ENCODE measurements at regions of chr1 and their contacts with region 1.

Region 1: GRCh38 chr1:235128456-235129328 is at the start of gene TOMM20:
- DNase-seq: peak; percentile 96 to 100 (median 97)
- ATAC-seq: peak; percentile 94
- H3K4me3 ChIP-seq: peak within 1 kb of the TSS; percentile 90
- H3K27ac ChIP-seq: peak within 1 kb of the TSS; percentile 98
- H3K4me1 ChIP-seq: peaks cover 11 to 13% of the 10 kb centered on the region in 2 experiments; a peak in 4 of 5 replicates
- H3K27me3 ChIP-seq: no peaks in the 10 kb centered on the region
- CTCF ChIP-seq: 0 out of 6 replicates have a peak, but pooled peaks of 1 of the 3 experiments have one; percentile 12
- EP300 ChIP-seq: peak; percentile 37; the same call in 1 of the 2 replicates
- POLR2A ChIP-seq: peak; percentile 98
- RAD21 ChIP-seq: no peak
- polyA plus RNA-seq, gene TOMM20: 70.6 to 102 TPM

Region 2: GRCh38 chr1:235105051-235106043 is 23.3 kb before region 1 on chr1:
- CTCF ChIA-PET with region 1: interaction called, 4 read pairs
- POLR2A ChIA-PET with region 1: interaction called, 51 read pairs
- in situ Hi-C with region 1: no loop called
- intact Hi-C with region 1: loop called (anchors 1 kb)
- DNase-seq: peak in 1 of 4 experiments; percentile 30
- ATAC-seq: peak; percentile 20
- H3K4me3 ChIP-seq: no peak overlapping the region
- H3K27ac ChIP-seq: peak overlapping the region; percentile 61; the same call in 2 of the 3 replicates
- H3K4me1 ChIP-seq: peaks cover 5 to 14% of the 10 kb centered on the region in 2 experiments; a peak in 4 of 5 replicates
- H3K27me3 ChIP-seq: no peaks in the 10 kb centered on the region
- CTCF ChIP-seq: no peak
- EP300 ChIP-seq: no peak
- POLR2A ChIP-seq: no peak
- RAD21 ChIP-seq: no peak; a peak in 1 of 4 replicates

Region 3: DNA sequence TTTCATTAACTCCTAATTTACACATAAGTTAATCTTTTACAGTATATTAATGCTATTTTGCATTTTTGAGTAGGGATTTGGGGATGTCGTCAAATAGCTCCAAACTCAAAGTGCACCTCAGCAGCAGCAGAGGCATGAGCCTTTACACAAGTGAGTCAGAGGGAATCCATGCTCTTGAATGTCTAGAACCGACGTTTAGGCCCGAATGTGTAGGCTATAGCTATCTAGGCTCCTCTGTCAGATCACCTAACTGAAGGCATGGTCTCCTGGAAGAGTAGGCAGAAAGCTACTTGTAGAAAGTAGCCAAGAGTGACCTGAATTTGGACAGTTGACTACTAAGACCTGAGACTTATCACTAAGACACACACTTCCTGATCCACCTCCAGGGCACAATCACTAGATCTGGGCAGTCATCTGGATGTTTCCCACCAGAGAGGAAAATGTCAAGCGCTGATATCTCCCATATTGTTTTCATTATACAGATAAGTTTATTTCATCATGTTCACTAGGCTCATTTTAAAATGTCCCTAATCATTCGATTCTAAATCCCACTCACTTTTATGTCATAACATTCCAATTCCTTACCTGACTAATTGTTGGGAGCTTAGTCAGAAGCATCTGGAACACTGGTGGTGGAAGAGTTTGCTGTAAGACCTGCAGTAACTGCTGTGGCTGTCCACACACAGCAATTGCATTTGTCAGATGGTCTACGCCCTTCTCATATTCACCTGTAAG is 15.3 kb before region 1 on chr1:
- CTCF ChIA-PET with region 1: no interaction called
- POLR2A ChIA-PET with region 1: interaction called, 51 read pairs
- in situ Hi-C with region 1: no loop called
- intact Hi-C with region 1: no loop called
- DNase-seq: peak; percentile 45 to 84 (median 62)
- ATAC-seq: peak; percentile 84
- H3K4me3 ChIP-seq: no peak overlapping the region
- H3K27ac ChIP-seq: peak overlapping the region; percentile 79
- H3K4me1 ChIP-seq: peaks cover 9 to 16% of the 10 kb centered on the region in 2 experiments; a peak in 4 of 5 replicates
- H3K27me3 ChIP-seq: no peaks in the 10 kb centered on the region
- CTCF ChIP-seq: no peak
- EP300 ChIP-seq: peak; percentile 95
- POLR2A ChIP-seq: no peak
- RAD21 ChIP-seq: peak in 1 of 2 experiments; percentile 5; a peak in 1 of 4 replicates

Region 4: GRCh38 chr1:235138821-235139220 is 10.1 kb after region 1 on chr1:
- CTCF ChIA-PET with region 1: no interaction called
- POLR2A ChIA-PET with region 1: interaction called, 20 read pairs
- in situ Hi-C with region 1: no loop called
- intact Hi-C with region 1: no loop called
- DNase-seq: no peak
- ATAC-seq: no peak
- H3K4me3 ChIP-seq: no peak overlapping the region
- H3K27ac ChIP-seq: no peak overlapping the region
- H3K4me1 ChIP-seq: no peaks in the 10 kb centered on the region
- H3K27me3 ChIP-seq: no peaks in the 10 kb centered on the region
- CTCF ChIP-seq: no peak
- EP300 ChIP-seq: no peak
- POLR2A ChIP-seq: no peak
- RAD21 ChIP-seq: no peak

Region 5: DNA sequence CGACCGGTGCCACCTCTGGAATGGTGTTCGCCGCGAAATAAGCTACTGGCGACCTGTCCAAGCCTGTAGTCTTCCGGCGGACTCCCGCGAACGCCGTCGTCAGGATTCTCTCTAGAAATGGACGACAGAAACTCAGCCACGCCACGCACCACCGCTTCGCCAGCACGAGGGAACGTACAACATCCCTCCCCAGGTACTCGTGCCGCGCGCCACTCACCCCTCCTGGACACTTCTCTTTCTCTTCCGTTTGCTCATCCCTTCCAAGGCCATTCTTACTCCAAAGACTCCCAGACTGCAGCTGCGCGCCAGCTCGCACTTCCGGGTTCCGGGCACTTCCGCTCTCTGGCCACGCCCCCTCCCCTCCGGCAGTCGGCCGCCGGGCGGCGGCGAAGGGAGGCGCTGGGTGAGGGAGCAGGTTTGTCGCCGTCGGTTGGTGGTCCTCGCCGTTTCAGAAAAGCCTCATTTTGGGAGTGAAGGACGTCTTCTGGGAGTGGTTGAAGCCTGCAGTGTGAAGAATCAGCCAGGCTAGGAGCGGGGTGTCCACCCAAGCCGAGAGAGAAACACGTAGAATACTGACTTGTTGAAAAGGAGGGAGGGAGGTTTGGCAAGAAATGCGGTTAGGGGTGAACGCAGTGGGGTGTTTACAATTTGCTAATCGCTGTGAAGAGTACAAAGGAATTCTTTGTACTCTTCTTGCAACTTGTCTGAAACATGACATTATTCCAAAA is 32.4 kb after region 1 on chr1 and contains the start of gene RBM34:
- CTCF ChIA-PET with region 1: no interaction called
- POLR2A ChIA-PET with region 1: interaction called, 21 read pairs
- in situ Hi-C with region 1: no loop called
- intact Hi-C with region 1: loop called (anchors 2 kb)
- DNase-seq: peak; percentile 95 to 97 (median 96)
- ATAC-seq: peak; percentile 97
- H3K4me3 ChIP-seq: peak within 1 kb of the TSS; percentile 78
- H3K27ac ChIP-seq: peak within 1 kb of the TSS; percentile 92
- H3K4me1 ChIP-seq: peaks cover 7 to 9% of the 10 kb centered on the region in 2 experiments; a peak in 3 of 5 replicates
- H3K27me3 ChIP-seq: no peaks in the 10 kb centered on the region; a peak in 1 of 5 replicates
- CTCF ChIP-seq: peak in 2 of 3 experiments; percentile 30 to 52; a peak in 5 of 6 replicates
- EP300 ChIP-seq: peak; percentile 7; the same call in 1 of the 2 replicates
- POLR2A ChIP-seq: peak; percentile 99
- RAD21 ChIP-seq: peak in 1 of 2 experiments; percentile 23; a peak in 1 of 4 replicates
- polyA plus RNA-seq, gene RBM34: 116 to 141 TPM

Region 6: GRCh38 chr1:235397733-235398132 is 269.0 kb after region 1 on chr1:
- CTCF ChIA-PET with region 1: no interaction called
- POLR2A ChIA-PET with region 1: no interaction called
- in situ Hi-C with region 1: no loop called
- intact Hi-C with region 1: no loop called
- DNase-seq: no peak
- ATAC-seq: no peak
- H3K4me3 ChIP-seq: no peak overlapping the region
- H3K27ac ChIP-seq: no peak overlapping the region
- H3K4me1 ChIP-seq: peaks cover 3 to 7% of the 10 kb centered on the region in 2 experiments; a peak in 1 of 5 replicates
- H3K27me3 ChIP-seq: no peaks in the 10 kb centered on the region
- CTCF ChIP-seq: no peak
- EP300 ChIP-seq: no peak
- POLR2A ChIP-seq: no peak
- RAD21 ChIP-seq: no peak

Region 7: DNA sequence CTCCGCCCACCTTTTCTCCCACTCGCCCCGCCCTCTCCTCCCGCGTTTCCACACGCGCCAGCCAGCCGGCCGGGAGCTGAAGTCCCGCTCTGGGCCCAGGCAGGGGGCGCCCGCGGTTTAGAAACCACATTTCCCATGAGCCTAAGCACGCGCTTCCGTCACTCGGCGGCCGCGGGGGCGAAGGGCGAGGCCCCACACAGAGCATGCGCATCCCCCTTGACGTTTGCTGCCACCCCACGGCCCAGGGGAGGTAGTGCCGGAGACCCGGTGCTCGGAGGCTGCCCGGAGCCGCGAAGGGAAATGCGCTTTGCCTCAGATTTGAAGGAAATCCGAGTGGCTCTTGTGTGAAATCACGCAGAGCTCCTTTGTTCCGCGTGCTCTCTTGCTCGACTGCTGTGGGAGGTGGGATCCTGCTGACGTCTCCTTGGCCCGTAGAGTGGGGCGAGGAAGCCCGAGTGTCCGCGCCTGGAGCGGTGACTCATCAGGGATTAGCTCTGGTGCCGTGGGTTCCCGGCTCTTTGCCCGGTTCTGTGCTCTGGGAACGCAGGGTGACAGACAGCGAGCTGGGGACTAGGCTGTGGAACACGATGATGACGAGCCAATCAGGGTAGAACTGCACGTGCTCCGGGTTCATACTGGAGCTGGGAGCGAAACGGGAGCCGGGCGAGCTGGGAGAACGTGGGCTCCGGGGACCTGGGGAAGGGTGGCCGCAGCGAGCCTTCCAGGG is 376.0 kb after region 1 on chr1:
- CTCF ChIA-PET with region 1: no interaction called
- POLR2A ChIA-PET with region 1: interaction called, 3 read pairs
- in situ Hi-C with region 1: no loop called
- intact Hi-C with region 1: loop called (anchors 1 kb)
- DNase-seq: peak; percentile 97 to 100 (median 98)
- ATAC-seq: peak; percentile 87
- H3K4me3 ChIP-seq: peak overlapping the region; percentile 66
- H3K27ac ChIP-seq: peak overlapping the region; percentile 96
- H3K4me1 ChIP-seq: peaks cover 18 to 21% of the 10 kb centered on the region in 2 experiments; a peak in 4 of 5 replicates
- H3K27me3 ChIP-seq: no peaks in the 10 kb centered on the region
- CTCF ChIP-seq: peak; percentile 90 to 97 (median 91)
- EP300 ChIP-seq: 0 out of 2 replicates have a peak, but pooled peaks have one; percentile 21
- POLR2A ChIP-seq: peak; percentile 97
- RAD21 ChIP-seq: peak; percentile 50 to 57

Region 8: GRCh38 chr1:235567812-235568503 is 439.3 kb after region 1 on chr1:
- CTCF ChIA-PET with region 1: no interaction called
- POLR2A ChIA-PET with region 1: no interaction called
- in situ Hi-C with region 1: no loop called
- intact Hi-C with region 1: no loop called
- DNase-seq: no peak
- ATAC-seq: no peak
- H3K4me3 ChIP-seq: no peak overlapping the region
- H3K27ac ChIP-seq: no peak overlapping the region
- H3K4me1 ChIP-seq: no peaks in the 10 kb centered on the region
- H3K27me3 ChIP-seq: peaks cover 32 to 45% of the 10 kb centered on the region in 2 experiments
- CTCF ChIP-seq: no peak
- EP300 ChIP-seq: no peak
- POLR2A ChIP-seq: no peak
- RAD21 ChIP-seq: no peak

Measured in K562 (cell line).